ENCODE measurements at regions of chr9 and their contacts with region 1.

Region 1: DNA sequence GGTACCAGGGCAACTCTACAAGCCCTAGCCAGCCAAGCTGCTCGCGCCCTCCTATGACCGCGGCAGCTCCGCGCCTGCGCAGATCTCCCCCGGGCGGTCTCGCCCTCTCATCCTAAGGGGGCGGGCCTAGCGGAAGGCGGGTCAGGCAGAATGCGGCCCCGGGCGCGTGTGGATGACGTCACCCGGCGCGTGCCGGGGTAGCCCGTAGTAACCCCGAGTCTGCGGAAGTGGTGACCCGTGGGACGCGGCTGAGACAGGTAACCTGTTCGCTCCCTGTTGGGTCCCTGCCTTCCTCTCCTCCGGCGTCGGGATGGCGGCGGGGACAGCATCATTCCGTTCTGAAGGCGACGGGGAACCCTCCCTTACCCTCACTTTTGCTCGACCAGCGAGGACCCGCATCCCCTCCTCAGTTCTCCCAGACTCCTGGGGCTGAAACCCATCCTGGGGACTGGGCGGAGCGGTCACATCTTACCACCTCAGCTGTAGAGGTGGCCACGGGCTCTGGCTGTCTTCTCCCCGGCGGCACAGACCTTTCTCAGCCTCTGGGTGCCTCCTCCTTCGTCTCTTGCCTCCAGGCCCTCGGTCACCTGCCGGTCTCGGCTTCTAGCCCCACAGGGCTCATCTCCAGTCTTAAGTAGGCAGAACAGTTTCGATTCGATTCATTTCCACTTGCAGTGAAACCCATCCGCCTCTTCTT is at the start of gene AOPEP:
- DNase-seq: peak; percentile 98
- ATAC-seq: peak; percentile 97
- H3K4me3 ChIP-seq: peak within 1 kb of the TSS; percentile 72 to 96 (median 81)
- H3K4me3 Mint-ChIP-seq: peak within 1 kb of the TSS; percentile 97
- H3K27ac ChIP-seq: peak within 1 kb of the TSS; percentile 91 to 94
- H3K27ac Mint-ChIP-seq: peak within 1 kb of the TSS; percentile 96
- H3K4me1 ChIP-seq: peaks cover 10 to 11% of the 10 kb centered on the region in 2 donors
- H3K4me1 Mint-ChIP-seq: peaks cover 16% of the 10 kb centered on the region
- H3K27me3 ChIP-seq: no peaks in the 10 kb centered on the region
- H3K27me3 Mint-ChIP-seq: no peaks in the 10 kb centered on the region
- CTCF ChIP-seq: no peak
- total RNA-seq, gene AOPEP: 35.8 and 37.6 TPM in 2 replicates

Region 2: DNA sequence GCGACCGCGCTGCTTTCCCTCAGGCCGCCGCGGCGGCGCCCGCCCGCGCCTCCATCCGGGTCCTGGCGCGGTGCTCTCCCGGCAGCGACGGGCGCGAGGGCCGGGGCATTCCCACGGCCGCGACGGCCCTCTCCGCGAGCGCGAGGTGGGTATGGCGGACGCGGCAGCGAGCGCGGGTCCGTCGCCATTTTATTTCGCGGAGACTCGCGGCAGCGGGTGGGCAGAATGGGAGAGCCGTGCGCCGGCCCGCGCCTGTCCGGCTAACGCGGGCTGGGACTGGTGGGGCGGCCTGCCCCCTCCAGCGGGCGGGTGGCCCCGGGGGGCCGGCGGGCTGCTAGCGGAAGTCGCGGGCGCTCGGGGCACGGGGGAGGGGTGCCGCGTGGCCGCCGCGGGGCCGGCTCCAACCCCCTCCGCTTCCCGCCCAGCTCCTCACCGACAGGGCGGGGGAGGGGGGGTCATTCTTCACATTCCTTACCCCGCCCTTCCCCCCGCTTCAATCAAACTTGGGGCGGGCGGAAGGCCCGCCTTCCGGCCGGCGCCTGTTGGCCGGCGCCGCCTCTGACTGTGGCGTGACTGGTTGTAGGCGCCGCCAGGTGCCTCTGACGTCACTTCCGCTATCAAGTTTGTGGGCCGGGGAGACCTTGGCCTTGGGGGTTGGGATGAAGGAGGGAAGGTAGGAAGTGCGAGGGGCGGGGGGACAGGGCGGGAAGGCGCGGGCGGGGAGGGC is 560.2 kb before region 1 on chr9:
- CTCF ChIA-PET with region 1: no interaction called
- POLR2A ChIA-PET with region 1: no interaction called
- intact Hi-C with region 1: loop called (anchors 5 kb)
- DNase-seq: peak; percentile 96
- ATAC-seq: peak; percentile 56
- H3K4me3 ChIP-seq: peak overlapping the region in 4 of 5 experiments; percentile 75 to 86 (median 80)
- H3K4me3 Mint-ChIP-seq: peak overlapping the region; percentile 92
- H3K27ac ChIP-seq: peak overlapping the region; percentile 86 to 99
- H3K27ac Mint-ChIP-seq: peak overlapping the region; percentile 95
- H3K4me1 ChIP-seq: peaks cover 36 to 46% of the 10 kb centered on the region in 2 donors
- H3K4me1 Mint-ChIP-seq: peaks cover 49% of the 10 kb centered on the region
- H3K27me3 ChIP-seq: no peaks in the 10 kb centered on the region
- H3K27me3 Mint-ChIP-seq: no peaks in the 10 kb centered on the region
- CTCF ChIP-seq: no peak

Region 3: GRCh38 chr9:94656200-94656599 is 70.4 kb before region 1 on chr9:
- CTCF ChIA-PET with region 1: no interaction called
- POLR2A ChIA-PET with region 1: no interaction called
- intact Hi-C with region 1: loop called (anchors 5 kb)
- DNase-seq: peak; percentile 86
- ATAC-seq: peak; percentile 100
- H3K4me3 ChIP-seq: peak overlapping the region in 4 of 5 experiments; percentile 36 to 66 (median 56)
- H3K4me3 Mint-ChIP-seq: peak overlapping the region; percentile 77
- H3K27ac ChIP-seq: peak overlapping the region; percentile 70 to 83
- H3K27ac Mint-ChIP-seq: peak overlapping the region; percentile 69
- H3K4me1 ChIP-seq: peaks cover 14 to 16% of the 10 kb centered on the region in 2 donors
- H3K4me1 Mint-ChIP-seq: peaks cover 17% of the 10 kb centered on the region
- H3K27me3 ChIP-seq: no peaks in the 10 kb centered on the region
- H3K27me3 Mint-ChIP-seq: peaks cover 5% of the 10 kb centered on the region
- CTCF ChIP-seq: no peak

Region 4: GRCh38 chr9:94672811-94673487 is 53.7 kb before region 1 on chr9:
- CTCF ChIA-PET with region 1: interaction called, 3 read pairs
- POLR2A ChIA-PET with region 1: interaction called, 10 read pairs
- intact Hi-C with region 1: loop called (anchors 2 kb)
- DNase-seq: no peak
- ATAC-seq: no peak
- H3K4me3 ChIP-seq: no peak overlapping the region
- H3K4me3 Mint-ChIP-seq: no peak overlapping the region
- H3K27ac ChIP-seq: no peak overlapping the region
- H3K27ac Mint-ChIP-seq: no peak overlapping the region
- H3K4me1 ChIP-seq: peaks cover 0 to 6% of the 10 kb centered on the region in 2 donors
- H3K4me1 Mint-ChIP-seq: peaks cover 3% of the 10 kb centered on the region
- H3K27me3 ChIP-seq: peaks cover 0 to 5% (median 0%) of the 10 kb centered on the region in 4 experiments
- H3K27me3 Mint-ChIP-seq: peaks cover 7% of the 10 kb centered on the region
- CTCF ChIP-seq: no peak

Region 5: GRCh38 chr9:94860968-94861871 is 134.6 kb after region 1 on chr9:
- CTCF ChIA-PET with region 1: no interaction called
- POLR2A ChIA-PET with region 1: interaction called, 4 read pairs
- intact Hi-C with region 1: loop called (anchors 2 kb)
- DNase-seq: peak; percentile 90
- ATAC-seq: peak; percentile 91
- H3K4me3 ChIP-seq: peak overlapping the region in 3 of 5 experiments; percentile 17 to 42 (median 22)
- H3K4me3 Mint-ChIP-seq: peak overlapping the region; percentile 65
- H3K27ac ChIP-seq: peak overlapping the region in 1 of 2 donors; percentile 10
- H3K27ac Mint-ChIP-seq: peak overlapping the region; percentile 81
- H3K4me1 ChIP-seq: peaks cover 25 to 26% of the 10 kb centered on the region in 2 donors
- H3K4me1 Mint-ChIP-seq: peaks cover 45% of the 10 kb centered on the region
- H3K27me3 ChIP-seq: no peaks in the 10 kb centered on the region
- H3K27me3 Mint-ChIP-seq: no peaks in the 10 kb centered on the region
- CTCF ChIP-seq: no peak

Region 6: DNA sequence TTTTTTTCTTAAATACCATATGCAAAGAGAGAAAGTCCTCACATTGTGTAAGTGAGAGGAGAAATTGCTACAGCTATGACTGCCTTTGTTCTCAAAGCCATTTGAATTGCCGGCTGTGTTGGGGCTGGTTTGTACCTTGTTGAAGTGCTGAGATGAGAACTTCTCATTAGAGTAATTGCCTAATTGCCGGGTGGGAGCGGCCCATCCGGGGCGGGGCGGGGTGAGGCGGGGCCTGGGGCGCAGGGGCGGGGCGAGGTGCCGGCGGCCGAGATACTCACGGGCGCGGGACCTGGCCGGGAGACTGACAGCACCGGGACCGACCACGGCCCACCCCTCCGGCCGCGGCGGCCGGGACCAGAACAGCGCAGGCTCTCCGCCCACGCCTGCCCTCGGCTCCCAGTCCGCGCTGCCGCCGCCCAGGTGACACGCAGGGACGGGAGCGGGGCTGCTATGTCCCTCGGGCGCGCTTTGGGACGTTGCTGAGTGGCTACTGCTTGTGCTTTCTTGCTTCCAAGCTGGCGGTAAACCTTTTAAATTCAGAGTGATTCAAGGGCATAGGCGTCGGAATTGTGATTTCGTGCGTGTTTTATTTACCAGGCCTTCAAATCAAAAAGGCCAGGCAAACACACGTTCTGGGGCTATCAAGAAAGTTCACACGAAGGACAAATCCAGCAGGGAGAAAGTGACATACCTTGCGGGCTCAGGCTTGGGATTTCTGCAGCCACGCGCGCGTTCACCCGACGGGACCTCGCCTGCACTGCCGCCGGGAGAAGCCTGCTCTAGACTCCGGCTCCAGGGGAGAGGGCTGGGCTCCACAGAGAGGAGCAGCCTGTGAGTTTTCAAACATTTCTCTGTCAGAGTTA is 321.8 kb after region 1 on chr9:
- CTCF ChIA-PET with region 1: no interaction called
- POLR2A ChIA-PET with region 1: no interaction called
- intact Hi-C with region 1: loop called (anchors 2 kb)
- DNase-seq: peak; percentile 55
- ATAC-seq: peak; percentile 96
- H3K4me3 ChIP-seq: peak overlapping the region; percentile 36 to 68 (median 54)
- H3K4me3 Mint-ChIP-seq: peak overlapping the region; percentile 88
- H3K27ac ChIP-seq: no peak overlapping the region
- H3K27ac Mint-ChIP-seq: no peak overlapping the region
- H3K4me1 ChIP-seq: peaks cover 9 to 13% of the 10 kb centered on the region in 2 donors
- H3K4me1 Mint-ChIP-seq: peaks cover 12% of the 10 kb centered on the region
- H3K27me3 ChIP-seq: peaks cover 0 to 19% (median 13%) of the 10 kb centered on the region in 4 experiments
- H3K27me3 Mint-ChIP-seq: peaks cover 28% of the 10 kb centered on the region
- CTCF ChIP-seq: no peak

Region 7: GRCh38 chr9:95317119-95317892 is 590.7 kb after region 1 on chr9 and contains the start of gene FANCC:
- CTCF ChIA-PET with region 1: no interaction called
- POLR2A ChIA-PET with region 1: no interaction called
- intact Hi-C with region 1: loop called (anchors 2 kb)
- DNase-seq: peak; percentile 92
- ATAC-seq: peak; percentile 82
- H3K4me3 ChIP-seq: peak within 1 kb of the TSS; percentile 72 to 98 (median 94)
- H3K4me3 Mint-ChIP-seq: peak within 1 kb of the TSS; percentile 94
- H3K27ac ChIP-seq: peak within 1 kb of the TSS; percentile 74 to 84
- H3K27ac Mint-ChIP-seq: peak within 1 kb of the TSS; percentile 93
- H3K4me1 ChIP-seq: peaks cover 14 to 16% of the 10 kb centered on the region in 2 donors
- H3K4me1 Mint-ChIP-seq: peaks cover 16% of the 10 kb centered on the region
- H3K27me3 ChIP-seq: peaks cover 0 to 6% (median 5%) of the 10 kb centered on the region in 4 experiments
- H3K27me3 Mint-ChIP-seq: peaks cover 4% of the 10 kb centered on the region
- CTCF ChIP-seq: no peak
- total RNA-seq, gene FANCC: 11.1 and 13.7 TPM in 2 replicates

Measured in B cell (primary cell).